CD8-positive, alpha-beta T cell (primary cell): ENCODE measurements at regions of chr19 and their contacts with region 1.

Region 1: GRCh38 chr19:2236314-2237050 is at the starts of genes PLEKHJ1 and SF3A2:
- DNase-seq: peak; percentile 96 to 100 (median 98)
- ATAC-seq: peak; percentile 81
- H3K4me3 ChIP-seq: peak within 1 kb of the TSS; percentile 75 to 83
- H3K4me3 Mint-ChIP-seq: peak within 1 kb of the TSS; percentile 97
- H3K27ac ChIP-seq: peak within 1 kb of the TSS; percentile 99
- H3K27ac Mint-ChIP-seq: peak within 1 kb of the TSS; percentile 99
- H3K4me1 ChIP-seq: peaks cover 58% of the 10 kb centered on the region
- H3K4me1 Mint-ChIP-seq: peaks cover 57% of the 10 kb centered on the region
- H3K27me3 ChIP-seq: no peaks in the 10 kb centered on the region
- H3K27me3 Mint-ChIP-seq: no peaks in the 10 kb centered on the region
- CTCF ChIP-seq: peak; percentile 99
- total RNA-seq, gene PLEKHJ1: 25.9 to 26.1 TPM
- total RNA-seq, gene SF3A2: 164 to 167 TPM

Region 2: GRCh38 chr19:2164020-2164998 is 72.2 kb before region 1 on chr19:
- CTCF ChIA-PET with region 1: no interaction called
- POLR2A ChIA-PET with region 1: no interaction called
- intact Hi-C with region 1: loop called (anchors 1 to 2 kb)
- DNase-seq: no peak
- ATAC-seq: peak; percentile 41
- H3K4me3 ChIP-seq: peak overlapping the region; percentile 67
- H3K4me3 Mint-ChIP-seq: peak overlapping the region; percentile 86
- H3K27ac ChIP-seq: peak overlapping the region; percentile 48 to 76
- H3K27ac Mint-ChIP-seq: peak overlapping the region; percentile 18
- H3K4me1 ChIP-seq: peaks cover 33% of the 10 kb centered on the region
- H3K4me1 Mint-ChIP-seq: peaks cover 26% of the 10 kb centered on the region
- H3K27me3 ChIP-seq: peaks cover 0 to 2% of the 10 kb centered on the region in 2 experiments
- H3K27me3 Mint-ChIP-seq: no peaks in the 10 kb centered on the region
- CTCF ChIP-seq: no peak

Region 3: DNA sequence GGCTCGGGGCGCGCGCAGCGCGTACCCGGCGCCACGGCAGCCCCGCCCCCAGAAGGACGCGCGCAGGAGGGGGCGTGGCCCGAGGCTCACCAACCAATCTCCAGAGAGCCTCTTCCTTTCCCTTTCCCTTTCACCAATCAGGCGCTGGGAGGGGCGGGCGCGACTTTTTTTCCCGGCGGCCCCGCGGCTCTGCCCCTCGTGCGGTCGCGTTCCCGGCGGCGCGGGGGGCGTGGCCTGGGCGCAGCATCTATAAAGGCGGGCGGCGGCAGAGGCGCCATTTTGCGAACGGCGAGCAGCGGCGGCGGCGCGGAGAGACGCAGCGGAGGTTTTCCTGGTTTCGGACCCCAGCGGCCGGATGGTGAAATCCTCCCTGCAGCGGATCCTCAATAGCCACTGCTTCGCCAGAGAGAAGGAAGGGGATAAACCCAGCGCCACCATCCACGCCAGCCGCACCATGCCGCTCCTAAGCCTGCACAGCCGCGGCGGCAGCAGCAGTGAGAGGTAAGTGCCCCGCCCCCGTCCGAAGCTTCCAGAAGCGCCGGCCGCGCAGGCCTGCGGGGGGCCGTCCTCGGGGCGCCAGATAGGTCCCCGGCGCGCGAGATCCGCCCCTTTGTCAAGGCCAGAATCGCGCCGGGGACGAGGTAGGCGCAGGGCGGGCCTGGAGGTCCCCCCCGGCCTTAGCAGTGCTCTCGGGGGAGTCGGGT is 32.9 kb after region 1 on chr19:
- CTCF ChIA-PET with region 1: interaction called, 86 read pairs
- POLR2A ChIA-PET with region 1: interaction called, 38 read pairs
- intact Hi-C with region 1: loop called (anchors 1 kb)
- DNase-seq: peak; percentile 98 to 100 (median 99)
- ATAC-seq: peak; percentile 80
- H3K4me3 ChIP-seq: peak overlapping the region; percentile 82 to 98
- H3K4me3 Mint-ChIP-seq: peak overlapping the region; percentile 91
- H3K27ac ChIP-seq: peak overlapping the region; percentile 80 to 86
- H3K27ac Mint-ChIP-seq: peak overlapping the region; percentile 92
- H3K4me1 ChIP-seq: peaks cover 45% of the 10 kb centered on the region
- H3K4me1 Mint-ChIP-seq: peaks cover 35% of the 10 kb centered on the region
- H3K27me3 ChIP-seq: no peaks in the 10 kb centered on the region
- H3K27me3 Mint-ChIP-seq: no peaks in the 10 kb centered on the region
- CTCF ChIP-seq: no peak

Region 4: GRCh38 chr19:2341000-2341751 is 104.7 kb after region 1 on chr19:
- CTCF ChIA-PET with region 1: no interaction called
- POLR2A ChIA-PET with region 1: no interaction called
- intact Hi-C with region 1: no loop called
- DNase-seq: no peak
- ATAC-seq: no peak
- H3K4me3 ChIP-seq: no peak overlapping the region
- H3K4me3 Mint-ChIP-seq: no peak overlapping the region
- H3K27ac ChIP-seq: no peak overlapping the region
- H3K27ac Mint-ChIP-seq: no peak overlapping the region
- H3K4me1 ChIP-seq: no peaks in the 10 kb centered on the region
- H3K4me1 Mint-ChIP-seq: peaks cover 5% of the 10 kb centered on the region
- H3K27me3 ChIP-seq: no peaks in the 10 kb centered on the region
- H3K27me3 Mint-ChIP-seq: no peaks in the 10 kb centered on the region
- CTCF ChIP-seq: no peak

Region 5: DNA sequence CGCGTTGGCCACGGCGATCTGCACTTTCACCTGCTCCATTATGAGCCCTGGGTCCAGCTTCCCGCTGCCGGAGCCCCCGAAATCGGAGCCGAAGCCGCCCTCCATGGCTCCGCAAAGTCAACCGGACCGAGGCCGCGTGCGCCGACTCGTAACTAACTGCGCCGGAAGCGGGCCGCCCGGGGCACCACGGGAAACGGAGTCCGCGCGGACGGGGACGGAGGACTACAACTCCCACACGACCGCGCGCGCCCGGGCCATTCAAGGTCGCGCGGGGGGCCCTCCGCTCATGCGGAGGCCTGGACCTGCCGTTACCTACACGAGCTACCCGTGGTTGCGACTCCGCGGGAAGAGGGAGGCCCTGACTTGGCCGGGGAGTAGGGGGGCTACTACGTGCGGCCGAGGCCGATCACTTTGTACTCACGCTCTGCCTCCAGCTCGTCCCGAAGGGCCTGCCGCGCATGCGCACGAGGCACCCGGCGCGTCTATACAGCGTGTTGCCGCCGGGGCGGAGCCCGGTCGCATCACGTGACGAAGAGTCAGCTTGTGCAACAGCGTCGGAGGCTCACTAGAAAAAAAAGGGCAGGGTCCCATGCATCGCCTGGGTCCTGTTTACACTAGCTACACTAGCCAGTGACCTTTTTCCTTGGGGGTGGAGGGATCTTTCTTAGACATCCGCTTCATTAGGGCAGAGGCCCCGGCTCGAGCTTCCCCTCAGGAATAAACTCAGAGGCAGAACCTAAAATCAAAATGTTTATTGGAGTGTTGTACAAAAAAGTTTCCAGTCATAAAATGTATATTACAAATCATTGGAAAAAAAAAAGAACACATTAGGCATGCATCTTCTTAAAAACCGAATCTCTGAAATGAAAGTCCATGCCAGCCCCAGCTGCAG is 191.2 kb after region 1 on chr19 and contains the start of gene TIMM13:
- CTCF ChIA-PET with region 1: no interaction called
- POLR2A ChIA-PET with region 1: interaction called, 4 read pairs
- intact Hi-C with region 1: loop called (anchors 1 kb)
- DNase-seq: peak; percentile 91 to 98 (median 96)
- ATAC-seq: peak; percentile 94
- H3K4me3 ChIP-seq: peak within 1 kb of the TSS; percentile 92 to 98
- H3K4me3 Mint-ChIP-seq: peak within 1 kb of the TSS; percentile 95
- H3K27ac ChIP-seq: peak within 1 kb of the TSS; percentile 96 to 99
- H3K27ac Mint-ChIP-seq: peak within 1 kb of the TSS; percentile 98
- H3K4me1 ChIP-seq: peaks cover 19% of the 10 kb centered on the region
- H3K4me1 Mint-ChIP-seq: peaks cover 13% of the 10 kb centered on the region
- H3K27me3 ChIP-seq: no peaks in the 10 kb centered on the region
- H3K27me3 Mint-ChIP-seq: no peaks in the 10 kb centered on the region
- CTCF ChIP-seq: no peak
- total RNA-seq, gene TIMM13: 21.5 to 24.4 TPM

Region 6: GRCh38 chr19:2636897-2637683 is 400.6 kb after region 1 on chr19:
- CTCF ChIA-PET with region 1: no interaction called
- POLR2A ChIA-PET with region 1: no interaction called
- intact Hi-C with region 1: loop called in 1 of 2 experiments (anchors 2 kb)
- DNase-seq: peak; percentile 59 to 85 (median 75)
- ATAC-seq: peak; percentile 99
- H3K4me3 ChIP-seq: no peak overlapping the region
- H3K4me3 Mint-ChIP-seq: no peak overlapping the region
- H3K27ac ChIP-seq: no peak overlapping the region
- H3K27ac Mint-ChIP-seq: no peak overlapping the region
- H3K4me1 ChIP-seq: peaks cover 12% of the 10 kb centered on the region
- H3K4me1 Mint-ChIP-seq: peaks cover 9% of the 10 kb centered on the region
- H3K27me3 ChIP-seq: no peaks in the 10 kb centered on the region
- H3K27me3 Mint-ChIP-seq: no peaks in the 10 kb centered on the region
- CTCF ChIP-seq: peak; percentile 70